Esophagus muscularis mucosa (tissue), 4 donors: ENCODE measurements at regions of chr3 and their contacts with region 1.

Region 1: DNA sequence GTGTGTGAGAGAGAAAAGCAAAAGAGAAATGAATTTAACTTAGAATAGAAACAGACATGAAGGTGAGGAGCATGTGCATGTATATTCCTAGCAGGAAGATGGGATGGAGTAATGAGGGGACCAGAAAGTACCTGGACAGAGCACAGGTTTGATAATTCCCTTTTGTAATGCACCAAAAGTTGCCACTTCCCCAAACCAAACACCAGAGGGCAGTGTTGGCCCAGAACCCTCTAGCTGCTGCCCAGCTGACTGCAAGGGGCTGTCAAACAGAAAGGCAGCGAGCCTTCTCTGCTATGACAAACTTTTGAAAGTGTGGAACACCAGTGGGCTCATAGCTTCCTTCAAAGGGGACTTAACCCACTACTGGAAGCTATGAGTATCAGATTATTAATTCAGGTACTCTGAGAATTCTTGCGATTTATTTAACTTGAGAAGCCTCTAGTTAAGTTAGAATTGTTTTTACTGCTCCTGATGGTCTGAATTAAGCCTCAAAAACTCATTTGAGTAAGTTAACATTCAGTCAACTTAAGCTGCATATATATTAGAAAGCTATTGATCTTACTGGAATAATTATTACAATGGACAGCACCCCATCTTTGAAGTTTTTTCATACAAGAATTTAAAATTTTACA is 234.9 kb downstream of the NEK10 start:
- DNase-seq: no peak
- H3K4me3 ChIP-seq: no peak overlapping the region
- H3K27ac ChIP-seq: no peak overlapping the region
- H3K4me1 ChIP-seq: peaks cover 4 to 5% (median 5%) of the 10 kb centered on the region in 4 donors
- H3K27me3 ChIP-seq: no peaks in the 10 kb centered on the region
- CTCF ChIP-seq: peak; percentile 84 to 92 (median 89)
- EP300 ChIP-seq: no peak
- POLR2A ChIP-seq: no peak

Region 2: GRCh38 chr3:27279123-27279522 is 144.8 kb after region 1 on chr3:
- intact Hi-C with region 1: loop called (anchors 2 kb)
- DNase-seq: no peak
- H3K4me3 ChIP-seq: no peak overlapping the region
- H3K27ac ChIP-seq: no peak overlapping the region
- H3K4me1 ChIP-seq: peaks cover 0 to 4% (median 0%) of the 10 kb centered on the region in 4 donors
- H3K27me3 ChIP-seq: no peaks in the 10 kb centered on the region
- CTCF ChIP-seq: peak; percentile 40 to 42 (median 42)
- EP300 ChIP-seq: no peak
- POLR2A ChIP-seq: no peak

Region 3: GRCh38 chr3:27467545-27467944 is 333.3 kb after region 1 on chr3:
- intact Hi-C with region 1: loop called (anchors 10 kb)
- DNase-seq: no peak
- H3K4me3 ChIP-seq: no peak overlapping the region
- H3K27ac ChIP-seq: no peak overlapping the region
- H3K4me1 ChIP-seq: peaks cover 5 to 33% (median 23%) of the 10 kb centered on the region in 4 donors
- H3K27me3 ChIP-seq: no peaks in the 10 kb centered on the region
- CTCF ChIP-seq: peak; percentile 56 to 64 (median 63)
- EP300 ChIP-seq: no peak
- POLR2A ChIP-seq: no peak

Region 4: GRCh38 chr3:27681245-27681748 is 547.0 kb after region 1 on chr3:
- intact Hi-C with region 1: loop called (anchors 10 kb)
- DNase-seq: no peak
- H3K4me3 ChIP-seq: peak overlapping the region in 2 of 4 donors; percentile 35
- H3K27ac ChIP-seq: no peak overlapping the region
- H3K4me1 ChIP-seq: peaks cover 0 to 20% (median 10%) of the 10 kb centered on the region in 4 donors
- H3K27me3 ChIP-seq: no peaks in the 10 kb centered on the region
- CTCF ChIP-seq: peak; percentile 52 to 62 (median 60)
- EP300 ChIP-seq: no peak
- POLR2A ChIP-seq: no peak